ENCODE measurements at regions of chr16 and their contacts with region 1.

Region 1: GRCh38 chr16:5422643-5423496 is 325.3 kb upstream of the EEF2KMT start:
- DNase-seq: no peak
- H3K4me3 ChIP-seq: no peak overlapping the region
- CTCF ChIP-seq: no peak
- POLR2A ChIP-seq: no peak

Region 2: GRCh38 chr16:4972938-4973587 is 449.8 kb before region 1 on chr16:
- intact Hi-C with region 1: loop called (anchors 5 kb)
- DNase-seq: no peak
- H3K4me3 ChIP-seq: no peak overlapping the region
- CTCF ChIP-seq: no peak
- POLR2A ChIP-seq: no peak